Sciatic nerve (tissue), 2 donors: ENCODE measurements at regions of chr3 and their contacts with region 1.

Region 1: DNA sequence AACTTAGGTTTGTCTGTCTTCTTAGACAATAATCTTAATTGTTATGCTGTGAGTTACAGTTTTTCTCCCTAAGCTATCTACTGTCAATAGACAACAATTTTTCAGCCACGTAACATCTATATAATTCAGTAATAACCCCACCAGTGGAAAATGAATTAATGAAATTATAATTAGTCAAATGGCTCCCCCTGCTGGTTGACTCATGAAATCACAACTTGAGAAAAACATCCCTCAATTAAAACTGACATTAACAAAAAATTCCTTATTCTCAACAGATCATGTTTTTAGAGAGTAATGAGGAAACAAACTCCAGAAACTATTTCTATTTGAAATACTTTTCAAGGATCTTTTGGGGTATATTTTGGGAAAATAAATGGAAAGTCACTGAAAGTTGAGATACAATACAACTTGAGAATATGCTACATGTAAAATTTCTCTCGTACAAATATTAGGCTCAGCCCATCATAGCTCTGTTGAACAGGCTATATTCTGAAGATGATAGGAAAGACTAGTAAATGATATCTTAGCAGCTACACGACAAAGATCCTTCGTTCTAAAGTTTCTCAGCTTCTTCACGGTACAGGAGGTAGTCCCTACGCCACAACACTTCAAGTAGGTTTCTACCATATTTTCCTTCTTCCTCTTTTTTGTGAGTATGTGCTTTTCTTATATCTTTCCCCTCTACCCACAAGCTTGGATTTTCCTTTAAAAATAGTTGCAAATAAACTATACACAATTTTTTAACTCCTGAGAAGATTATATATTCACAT is 20.7 kb downstream of the PPP1R2 start:
- DNase-seq: no peak
- ATAC-seq: peak; percentile 22

Region 2: DNA sequence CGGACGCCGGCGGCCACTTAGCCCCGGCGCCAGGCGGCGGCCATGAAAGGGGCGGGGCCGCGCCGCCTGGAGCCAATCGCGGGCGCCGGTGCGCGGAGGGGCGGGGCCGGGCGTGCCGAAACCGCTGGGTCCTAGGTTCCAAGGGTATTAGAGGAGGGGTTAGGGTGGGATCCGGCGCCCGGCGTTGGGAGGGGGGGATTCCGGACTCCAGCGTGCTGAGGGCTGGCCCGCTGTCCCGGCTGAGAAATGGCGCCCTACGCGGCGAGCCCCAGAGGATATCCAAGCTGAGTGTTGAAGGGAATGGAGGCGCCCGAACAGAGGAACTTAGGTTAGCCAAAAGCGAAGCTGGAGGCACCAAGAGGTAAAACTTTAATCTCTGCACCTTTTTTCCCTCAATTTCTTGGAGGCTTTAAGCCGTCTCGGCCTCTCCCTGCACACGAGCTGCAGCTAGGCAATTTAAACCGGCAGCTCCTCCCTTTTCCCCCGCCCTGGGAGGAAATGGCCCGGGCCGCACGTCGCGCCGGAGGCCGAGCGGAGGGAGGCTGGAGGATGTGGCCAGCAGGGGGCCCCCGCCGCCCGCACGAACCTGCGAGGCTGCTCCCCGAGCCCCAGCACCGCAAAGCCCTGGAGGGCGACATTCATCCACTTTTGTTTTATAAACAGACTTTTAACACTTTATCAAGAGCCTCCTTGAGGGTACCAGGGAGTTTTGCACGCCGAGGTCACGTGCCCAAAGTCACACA is 251.2 kb before region 1 on chr3 and contains the start of gene XXYLT1:
- intact Hi-C with region 1: loop called (anchors 10 kb)
- DNase-seq: peak; percentile 93
- ATAC-seq: peak; percentile 95
- total RNA-seq, gene XXYLT1: 11.0 TPM